ENCODE measurements at regions of chr11 and their contacts with region 1.

Region 1: GRCh38 chr11:118198370-118198769 is 21.9 kb upstream of the SCN2B start:
- DNase-seq: no peak
- H3K4me3 ChIP-seq: peak overlapping the region in 3 of 4 donors; percentile 19 to 36 (median 23)
- H3K27ac ChIP-seq: no peak overlapping the region
- H3K4me1 ChIP-seq: peaks cover 16 to 30% (median 23%) of the 10 kb centered on the region in 4 donors
- H3K27me3 ChIP-seq: no peaks in the 10 kb centered on the region
- CTCF ChIP-seq: peak; percentile 72 to 87 (median 83)
- EP300 ChIP-seq: no peak
- POLR2A ChIP-seq: no peak

Region 2: GRCh38 chr11:118290923-118291322 is 92.6 kb after region 1 on chr11:
- intact Hi-C with region 1: loop called (anchors 5 kb)
- DNase-seq: no peak
- H3K4me3 ChIP-seq: no peak overlapping the region
- H3K27ac ChIP-seq: no peak overlapping the region
- H3K4me1 ChIP-seq: no peaks in the 10 kb centered on the region
- H3K27me3 ChIP-seq: peaks cover 0 to 20% (median 0%) of the 10 kb centered on the region in 4 donors
- CTCF ChIP-seq: peak in 2 of 3 experiments; percentile 11 to 26
- EP300 ChIP-seq: no peak
- POLR2A ChIP-seq: no peak

Region 3: DNA sequence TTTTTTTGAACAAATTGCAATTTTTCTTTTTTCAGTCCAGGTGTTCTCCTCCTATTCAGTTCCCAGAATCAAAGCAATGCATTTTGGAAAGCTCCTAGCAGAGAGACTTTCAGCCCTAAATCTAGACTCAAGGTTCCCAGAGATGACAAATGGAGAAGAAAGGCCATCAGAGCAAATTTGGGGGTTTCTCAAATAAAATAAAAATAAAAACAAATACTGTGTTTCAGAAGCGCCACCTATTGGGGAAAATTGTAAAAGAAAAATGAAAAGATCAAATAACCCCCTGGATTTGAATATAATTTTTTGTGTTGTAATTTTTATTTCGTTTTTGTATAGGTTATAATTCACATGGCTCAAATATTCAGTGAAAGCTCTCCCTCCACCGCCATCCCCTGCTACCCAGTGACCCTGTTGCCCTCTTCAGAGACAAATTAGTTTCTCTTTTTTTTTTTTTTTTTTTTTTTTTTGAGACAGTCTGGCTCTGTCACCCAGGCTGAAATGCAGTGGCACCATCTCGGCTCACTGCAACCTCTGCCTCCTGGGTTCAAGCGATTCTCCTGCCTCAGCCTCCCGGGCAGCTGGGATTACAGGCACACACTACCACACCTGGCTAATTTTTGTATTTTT is 154.8 kb after region 1 on chr11:
- intact Hi-C with region 1: loop called (anchors 2 kb)
- DNase-seq: no peak
- H3K4me3 ChIP-seq: no peak overlapping the region
- H3K27ac ChIP-seq: no peak overlapping the region
- H3K4me1 ChIP-seq: no peaks in the 10 kb centered on the region
- H3K27me3 ChIP-seq: peaks cover 0 to 29% (median 0%) of the 10 kb centered on the region in 4 donors
- CTCF ChIP-seq: peak; percentile 45 to 57 (median 50)
- EP300 ChIP-seq: no peak
- POLR2A ChIP-seq: no peak

Region 4: DNA sequence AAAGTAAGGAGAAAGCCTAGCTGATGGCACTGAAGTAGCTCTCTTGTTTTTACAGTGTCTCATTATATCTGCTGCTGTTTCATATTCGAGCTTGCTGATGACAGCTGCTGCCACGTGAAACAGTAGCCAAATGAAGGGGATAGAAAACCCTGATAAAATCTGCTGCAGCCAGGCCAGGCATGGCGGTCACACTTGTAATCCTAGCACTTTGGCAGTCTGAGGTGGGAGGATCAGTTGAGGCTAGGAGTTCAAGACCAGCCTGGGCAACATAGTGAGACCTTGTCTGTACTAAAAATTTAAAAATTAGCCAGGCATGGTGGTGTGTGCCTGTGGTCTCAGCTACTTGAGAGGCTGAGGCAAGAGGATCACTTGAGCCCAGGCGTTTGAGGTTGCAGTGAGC is 354.0 kb after region 1 on chr11:
- intact Hi-C with region 1: no loop called
- DNase-seq: peak; percentile 17
- H3K4me3 ChIP-seq: no peak overlapping the region
- H3K27ac ChIP-seq: no peak overlapping the region
- H3K4me1 ChIP-seq: no peaks in the 10 kb centered on the region
- H3K27me3 ChIP-seq: no peaks in the 10 kb centered on the region
- CTCF ChIP-seq: no peak
- EP300 ChIP-seq: no peak
- POLR2A ChIP-seq: no peak